Dendritic cell treated with granulocyte-macrophage colony-stimulating factor and Interleukin-4, amounts not matched to agents 40 ng/mL and 50 ng/mL, for 4 days (primary cell): ENCODE measurements at regions of chr3 and their contacts with region 1.

Region 1: GRCh38 chr3:156997351-156997750 is 162.6 kb downstream of the CCNL1 start:
- H3K4me3 Mint-ChIP-seq: no peak overlapping the region
- H3K27ac Mint-ChIP-seq: no peak overlapping the region
- H3K4me1 Mint-ChIP-seq: no peaks in the 10 kb centered on the region
- H3K27me3 Mint-ChIP-seq: peaks cover 2% of the 10 kb centered on the region

Region 2: DNA sequence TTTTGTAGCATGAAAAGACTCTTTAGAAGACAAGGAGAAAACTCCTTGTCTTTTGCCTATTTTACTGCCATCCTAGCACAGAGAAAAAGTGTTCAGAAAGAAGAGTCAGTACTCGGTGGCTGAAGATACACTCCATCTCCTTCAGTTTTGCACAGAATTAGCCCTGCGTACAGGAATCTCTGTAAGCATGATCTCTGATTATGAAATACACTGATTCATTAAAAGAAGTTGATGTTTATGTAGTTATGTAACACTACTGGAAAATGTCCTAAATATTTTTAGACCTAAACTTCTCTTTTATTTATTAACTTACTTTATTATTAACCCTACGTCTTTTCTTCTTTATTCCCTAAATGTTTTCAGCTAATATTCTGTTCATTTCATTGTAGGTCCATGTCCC is 32.8 kb before region 1 on chr3:
- intact Hi-C with region 1: loop called (anchors 5 kb)
- H3K4me3 Mint-ChIP-seq: no peak overlapping the region
- H3K27ac Mint-ChIP-seq: no peak overlapping the region
- H3K4me1 Mint-ChIP-seq: no peaks in the 10 kb centered on the region
- H3K27me3 Mint-ChIP-seq: peaks cover 3% of the 10 kb centered on the region